Activated B cell treated with CpG ODN at 0.5 μM for 24 hours (primary cell): ENCODE measurements at regions of chr12 and their contacts with region 1.

Region 1: DNA sequence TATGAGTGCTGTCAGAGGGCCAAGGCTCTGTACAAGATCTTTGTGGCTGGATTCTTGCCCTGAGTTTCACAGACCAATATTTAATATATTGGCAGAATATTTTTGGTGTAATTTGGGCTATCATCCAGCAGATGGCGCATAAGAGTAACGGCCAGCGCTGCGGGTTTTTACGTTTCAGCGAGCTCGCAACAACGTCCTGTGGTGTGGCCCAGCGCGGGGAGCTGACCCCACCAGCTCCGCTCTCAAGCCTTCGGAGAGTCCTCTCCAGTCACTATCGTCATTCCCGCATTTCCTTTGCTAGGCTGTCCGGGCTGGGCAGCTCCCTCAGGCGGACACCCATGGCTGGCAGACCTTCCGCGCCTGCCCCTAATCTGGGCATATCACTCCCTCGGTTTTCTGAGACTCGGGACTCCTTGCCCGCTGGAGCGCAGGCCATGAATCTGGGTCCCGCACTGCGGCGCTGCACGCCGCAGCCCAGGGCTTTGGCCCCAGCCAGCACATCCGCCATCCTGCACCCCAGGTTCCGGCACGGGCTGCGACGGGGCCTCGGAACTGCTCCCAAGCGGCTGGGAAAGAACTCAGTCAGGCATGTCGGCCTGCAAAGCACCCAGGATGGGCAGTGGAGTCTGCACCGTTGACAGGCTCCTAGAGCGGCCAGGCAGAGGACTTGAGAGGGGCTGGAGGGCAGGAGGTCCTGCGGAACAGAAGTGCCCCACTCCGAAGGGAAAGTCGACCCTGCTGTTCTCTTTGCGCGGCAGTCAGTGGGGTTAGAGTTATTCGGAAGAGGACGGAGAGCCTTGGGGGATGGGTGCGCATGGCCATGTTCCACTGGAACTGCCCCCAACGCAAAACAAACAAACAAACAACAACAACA is 18.4 kb downstream of the OLR1 start:
- DNase-seq: peak; percentile 39
- ATAC-seq: peak; percentile 80
- H3K4me3 Mint-ChIP-seq: peak overlapping the region; percentile 86
- H3K27ac Mint-ChIP-seq: no peak overlapping the region
- H3K4me1 Mint-ChIP-seq: peaks cover 16% of the 10 kb centered on the region
- H3K27me3 Mint-ChIP-seq: peaks cover 17% of the 10 kb centered on the region
- CTCF ChIP-seq: peak; percentile 71

Region 2: DNA sequence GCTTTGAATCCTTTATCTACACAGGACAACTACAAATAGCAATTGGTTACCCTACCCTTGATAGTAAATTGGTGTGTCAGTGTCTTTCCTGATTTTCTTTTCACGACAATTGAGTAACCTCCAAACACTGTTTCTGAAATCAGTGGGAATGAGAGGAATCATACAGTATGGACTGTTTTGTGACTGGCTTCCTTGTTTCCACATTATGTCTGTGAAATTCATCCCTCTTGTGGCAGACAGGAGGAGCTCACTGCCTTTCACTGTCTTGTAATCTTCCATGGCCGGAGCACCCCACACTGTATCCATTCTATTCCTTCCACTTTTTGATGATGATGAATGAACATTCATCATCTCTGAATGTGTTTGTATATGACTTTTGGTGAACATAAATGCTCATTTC is 781.3 kb before region 1 on chr12:
- CTCF ChIA-PET with region 1: no interaction called
- POLR2A ChIA-PET with region 1: no interaction called
- intact Hi-C with region 1: no loop called
- DNase-seq: no peak
- ATAC-seq: no peak
- H3K4me3 Mint-ChIP-seq: no peak overlapping the region
- H3K27ac Mint-ChIP-seq: no peak overlapping the region
- H3K4me1 Mint-ChIP-seq: no peaks in the 10 kb centered on the region
- H3K27me3 Mint-ChIP-seq: no peaks in the 10 kb centered on the region
- CTCF ChIP-seq: no peak

Region 3: GRCh38 chr12:10140001-10140400 is 13.5 kb before region 1 on chr12:
- CTCF ChIA-PET with region 1: interaction called, 19 read pairs
- POLR2A ChIA-PET with region 1: no interaction called
- intact Hi-C with region 1: no loop called
- DNase-seq: no peak
- ATAC-seq: peak; percentile 60
- H3K4me3 Mint-ChIP-seq: no peak overlapping the region
- H3K27ac Mint-ChIP-seq: no peak overlapping the region
- H3K4me1 Mint-ChIP-seq: no peaks in the 10 kb centered on the region
- H3K27me3 Mint-ChIP-seq: peaks cover 27% of the 10 kb centered on the region
- CTCF ChIP-seq: no peak

Region 4: GRCh38 chr12:10190558-10191388 is 37.3 kb after region 1 on chr12:
- CTCF ChIA-PET with region 1: interaction called, 14 read pairs
- POLR2A ChIA-PET with region 1: no interaction called
- intact Hi-C with region 1: loop called (anchors 1 kb)
- DNase-seq: no peak
- ATAC-seq: peak; percentile 94
- H3K4me3 Mint-ChIP-seq: no peak overlapping the region
- H3K27ac Mint-ChIP-seq: no peak overlapping the region
- H3K4me1 Mint-ChIP-seq: peaks cover 8% of the 10 kb centered on the region
- H3K27me3 Mint-ChIP-seq: peaks cover 51% of the 10 kb centered on the region
- CTCF ChIP-seq: peak; percentile 22

Region 5: GRCh38 chr12:10196210-10196609 is 42.7 kb after region 1 on chr12:
- CTCF ChIA-PET with region 1: interaction called, 12 read pairs
- POLR2A ChIA-PET with region 1: no interaction called
- intact Hi-C with region 1: no loop called
- DNase-seq: no peak
- ATAC-seq: peak; percentile 94
- H3K4me3 Mint-ChIP-seq: peak overlapping the region; percentile 46
- H3K27ac Mint-ChIP-seq: no peak overlapping the region
- H3K4me1 Mint-ChIP-seq: peaks cover 15% of the 10 kb centered on the region
- H3K27me3 Mint-ChIP-seq: peaks cover 50% of the 10 kb centered on the region
- CTCF ChIP-seq: no peak

Region 6: GRCh38 chr12:10227648-10228047 is 74.1 kb after region 1 on chr12:
- CTCF ChIA-PET with region 1: no interaction called
- POLR2A ChIA-PET with region 1: interaction called, 13 read pairs
- intact Hi-C with region 1: no loop called
- DNase-seq: no peak
- ATAC-seq: no peak
- H3K4me3 Mint-ChIP-seq: no peak overlapping the region
- H3K27ac Mint-ChIP-seq: no peak overlapping the region
- H3K4me1 Mint-ChIP-seq: peaks cover 6% of the 10 kb centered on the region
- H3K27me3 Mint-ChIP-seq: no peaks in the 10 kb centered on the region
- CTCF ChIP-seq: no peak

Region 7: DNA sequence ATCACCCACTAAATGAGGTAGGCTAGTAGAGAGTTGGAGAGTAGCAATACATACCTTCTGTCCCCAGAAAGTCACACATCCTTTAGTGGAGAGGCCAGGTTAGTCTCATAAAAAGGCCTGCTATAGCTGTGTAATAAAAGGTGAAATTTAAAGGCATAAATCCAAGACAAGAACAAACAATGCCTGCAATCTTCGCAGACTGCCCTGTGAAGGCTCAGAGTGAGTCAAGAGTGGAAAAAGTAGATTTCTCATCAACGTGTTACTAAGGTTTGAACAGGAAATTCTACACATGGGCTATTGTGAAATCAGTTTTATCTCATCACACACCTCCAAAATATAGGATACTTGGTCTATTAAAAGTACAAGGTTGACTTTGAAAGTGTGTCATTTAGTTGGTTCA is 299.6 kb after region 1 on chr12 and contains the start of gene KLRC1:
- CTCF ChIA-PET with region 1: no interaction called
- POLR2A ChIA-PET with region 1: no interaction called
- intact Hi-C with region 1: no loop called
- DNase-seq: no peak
- ATAC-seq: no peak
- H3K4me3 Mint-ChIP-seq: no peak within 1 kb of the TSS
- H3K27ac Mint-ChIP-seq: no peak within 1 kb of the TSS
- H3K4me1 Mint-ChIP-seq: no peaks in the 10 kb centered on the region
- H3K27me3 Mint-ChIP-seq: no peaks in the 10 kb centered on the region
- CTCF ChIP-seq: no peak
- total RNA-seq, gene KLRC1: not detected in 2 replicates

Region 8: DNA sequence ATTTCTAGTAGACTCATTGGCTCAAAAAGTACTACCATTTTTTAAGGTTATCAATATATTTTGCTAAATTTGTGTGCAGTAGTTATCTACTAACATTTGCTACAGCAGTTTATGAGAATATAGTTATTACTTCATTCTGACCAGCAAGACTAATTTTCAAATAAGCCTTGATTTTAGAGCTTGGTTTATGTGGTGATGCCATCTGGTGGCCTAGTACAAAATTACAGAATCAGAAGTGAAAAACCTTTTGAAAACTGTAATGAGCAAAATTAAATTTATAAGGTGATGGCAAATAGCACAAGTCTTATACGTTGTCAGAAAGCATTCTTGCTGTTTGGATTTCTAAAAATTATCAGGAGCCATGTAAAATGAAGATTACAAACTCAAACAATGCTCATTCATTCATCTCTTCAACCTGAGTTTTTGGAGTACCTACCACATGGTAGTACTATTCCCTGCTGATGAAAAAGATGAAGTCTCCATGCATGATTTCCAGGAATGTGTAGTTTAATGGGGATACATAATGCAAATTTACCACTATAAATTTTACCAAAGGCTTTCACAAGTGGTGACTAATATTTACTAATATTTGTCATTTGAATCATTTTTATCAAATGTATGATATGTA is 408.9 kb after region 1 on chr12:
- CTCF ChIA-PET with region 1: interaction called, 4 read pairs
- POLR2A ChIA-PET with region 1: no interaction called
- intact Hi-C with region 1: loop called (anchors 2 kb)
- DNase-seq: no peak
- ATAC-seq: no peak
- H3K4me3 Mint-ChIP-seq: no peak overlapping the region
- H3K27ac Mint-ChIP-seq: no peak overlapping the region
- H3K4me1 Mint-ChIP-seq: no peaks in the 10 kb centered on the region
- H3K27me3 Mint-ChIP-seq: peaks cover 11% of the 10 kb centered on the region
- CTCF ChIP-seq: peak; percentile 87

Region 9: DNA sequence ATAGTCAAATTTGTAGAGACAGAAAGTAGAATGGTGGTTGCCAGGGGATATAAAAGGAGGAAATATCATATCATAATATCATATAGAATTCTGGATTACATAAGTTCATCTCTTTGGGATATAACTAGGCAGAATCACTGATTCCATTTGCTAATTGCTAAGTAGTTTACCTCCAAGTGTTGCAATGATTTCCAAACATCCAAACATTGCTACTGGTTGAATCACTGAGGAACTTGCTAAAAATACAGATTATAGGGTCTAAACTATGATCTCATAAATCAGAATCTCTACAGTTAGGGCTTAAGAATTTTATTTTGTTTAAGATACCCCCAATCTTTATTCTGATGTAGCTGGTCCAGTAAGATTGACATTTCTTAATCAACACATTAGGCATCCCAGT is 1049.3 kb after region 1 on chr12:
- CTCF ChIA-PET with region 1: no interaction called
- POLR2A ChIA-PET with region 1: no interaction called
- intact Hi-C with region 1: loop called (anchors 5 kb)
- DNase-seq: no peak
- ATAC-seq: no peak
- H3K4me3 Mint-ChIP-seq: no peak overlapping the region
- H3K27ac Mint-ChIP-seq: no peak overlapping the region
- H3K4me1 Mint-ChIP-seq: no peaks in the 10 kb centered on the region
- H3K27me3 Mint-ChIP-seq: no peaks in the 10 kb centered on the region
- CTCF ChIP-seq: no peak